Left lung (tissue), 14 donors: ENCODE measurements at regions of chr3 and their contacts with region 1.

Region 1: GRCh38 chr3:119676771-119677640 is at the start of gene COX17:
- DNase-seq: peak; percentile 91 to 97 (median 94)
- ATAC-seq: peak; percentile 93
- H3K4me3 ChIP-seq: peak within 1 kb of the TSS; percentile 55 to 72
- H3K27ac ChIP-seq: peak within 1 kb of the TSS; percentile 95 to 99
- H3K4me1 ChIP-seq: peaks cover 12 to 21% of the 10 kb centered on the region in 2 donors
- H3K27me3 ChIP-seq: no peaks in the 10 kb centered on the region
- CTCF ChIP-seq: no peak
- polyA plus RNA-seq, gene COX17: 23.6 to 38.8 (median 28.5) TPM

Region 2: GRCh38 chr3:119598410-119599098 is 78.5 kb before region 1 on chr3:
- intact Hi-C with region 1: loop called in 1 of 2 experiments (anchors 10 kb)
- DNase-seq: no peak
- ATAC-seq: no peak
- H3K4me3 ChIP-seq: no peak overlapping the region
- H3K27ac ChIP-seq: peak overlapping the region in 1 of 2 donors; percentile 69
- H3K4me1 ChIP-seq: peaks cover 17 to 33% of the 10 kb centered on the region in 2 donors
- H3K27me3 ChIP-seq: no peaks in the 10 kb centered on the region
- CTCF ChIP-seq: no peak